ENCODE measurements at regions of chr17 and their contacts with region 1.

Region 1: DNA sequence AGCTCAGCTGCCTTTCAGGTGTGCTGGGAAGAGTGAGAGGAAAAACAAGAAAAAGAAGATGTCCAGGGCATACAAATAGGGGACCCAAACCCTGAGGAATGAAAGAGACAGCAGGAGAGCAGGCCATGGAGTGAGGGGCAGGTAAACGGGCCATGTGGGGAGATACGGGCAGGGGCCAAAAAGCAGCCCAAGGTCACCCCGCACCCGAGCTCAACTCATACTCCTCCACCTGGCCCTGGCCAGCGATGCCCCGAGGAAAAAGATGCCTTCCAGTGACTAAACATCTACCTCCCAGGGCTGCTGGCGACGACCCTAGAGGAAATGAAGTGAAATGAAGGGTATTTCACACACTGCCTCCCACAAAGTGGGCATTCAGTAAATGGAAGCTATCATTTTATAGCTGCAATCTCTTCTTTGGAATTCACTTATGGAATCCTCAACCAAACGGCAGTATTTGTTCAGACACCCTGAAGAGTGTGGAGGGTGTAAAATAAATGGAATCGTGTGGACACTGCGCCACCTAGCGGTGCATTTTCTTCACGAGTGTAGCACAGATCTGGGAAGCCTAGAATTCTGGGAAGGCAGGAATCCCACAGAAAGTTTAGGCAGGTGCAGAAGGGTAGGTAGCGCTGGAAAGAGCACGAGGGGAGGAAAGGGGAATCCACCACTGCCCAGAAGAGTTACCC is 14.9 kb downstream of the ELAC2 start:
- DNase-seq: no peak
- H3K4me3 Mint-ChIP-seq: no peak overlapping the region
- H3K27ac Mint-ChIP-seq: no peak overlapping the region
- H3K4me1 Mint-ChIP-seq: no peaks in the 10 kb centered on the region
- H3K27me3 Mint-ChIP-seq: no peaks in the 10 kb centered on the region

Region 2: DNA sequence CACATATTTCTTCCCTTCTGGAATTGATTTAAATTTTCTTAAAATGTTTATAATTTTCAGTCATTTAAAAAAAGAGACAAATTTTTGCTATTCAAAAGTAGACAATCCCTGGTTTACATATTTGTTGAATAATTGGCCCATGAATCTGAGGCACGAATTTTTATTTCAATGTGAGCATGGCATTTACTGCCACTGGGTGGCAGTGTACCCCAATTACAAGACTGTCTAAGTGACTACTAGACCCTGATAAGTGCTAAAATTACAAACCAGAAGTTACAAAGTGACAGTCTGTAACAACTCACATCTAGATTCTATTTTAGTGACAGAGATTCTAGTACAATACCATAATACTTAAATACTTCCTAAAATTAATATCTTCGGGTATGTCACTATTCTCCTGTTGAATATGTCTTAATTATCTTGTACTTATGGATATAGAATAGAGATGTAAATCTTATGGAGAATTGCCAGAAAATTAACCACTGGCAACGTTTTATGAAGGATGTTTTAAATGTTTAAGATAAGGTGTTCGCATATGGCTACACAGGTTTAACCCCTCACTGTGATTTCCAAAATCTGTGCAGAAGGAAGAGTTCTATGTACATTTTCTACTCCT is 746.4 kb before region 1 on chr17:
- intact Hi-C with region 1: loop called (anchors 10 kb)
- DNase-seq: no peak
- H3K4me3 Mint-ChIP-seq: no peak overlapping the region
- H3K27ac Mint-ChIP-seq: no peak overlapping the region
- H3K4me1 Mint-ChIP-seq: no peaks in the 10 kb centered on the region
- H3K27me3 Mint-ChIP-seq: no peaks in the 10 kb centered on the region

Region 3: GRCh38 chr17:12940699-12941098 is 62.2 kb before region 1 on chr17:
- intact Hi-C with region 1: no loop called
- DNase-seq: no peak
- H3K4me3 Mint-ChIP-seq: no peak overlapping the region
- H3K27ac Mint-ChIP-seq: no peak overlapping the region
- H3K4me1 Mint-ChIP-seq: no peaks in the 10 kb centered on the region
- H3K27me3 Mint-ChIP-seq: no peaks in the 10 kb centered on the region

Region 4: GRCh38 chr17:13017659-13018459 is 14.9 kb after region 1 on chr17 and contains the start of gene ELAC2:
- intact Hi-C with region 1: loop called (anchors 2 kb)
- DNase-seq: peak; percentile 97
- H3K4me3 Mint-ChIP-seq: peak within 1 kb of the TSS; percentile 92
- H3K27ac Mint-ChIP-seq: peak within 1 kb of the TSS; percentile 91
- H3K4me1 Mint-ChIP-seq: peaks cover 26% of the 10 kb centered on the region
- H3K27me3 Mint-ChIP-seq: no peaks in the 10 kb centered on the region
- total RNA-seq, gene ELAC2: 80.7 and 91.2 TPM in 2 replicates

Measured in activated T-helper 2 cell treated with anti-CD3 and anti-CD28 coated beads, Interferon-gamma antibody, Interleukin-2, Interleukin-4, amounts not matched to agents 10 μg/mL and 5 μg/mL and 100 μg/mL, durations not matched to agents 14 hours and 24 hours and 36 hours (primary cell).